Activated CD8-positive, alpha-beta memory T cell treated with anti-CD3 and anti-CD28 coated beads, Interleukin-2, amount 10 ng/mL, durations not matched to agents 7 days and 5 days (primary cell): ENCODE measurements at regions of chr17 and their contacts with region 1.

Region 1: DNA sequence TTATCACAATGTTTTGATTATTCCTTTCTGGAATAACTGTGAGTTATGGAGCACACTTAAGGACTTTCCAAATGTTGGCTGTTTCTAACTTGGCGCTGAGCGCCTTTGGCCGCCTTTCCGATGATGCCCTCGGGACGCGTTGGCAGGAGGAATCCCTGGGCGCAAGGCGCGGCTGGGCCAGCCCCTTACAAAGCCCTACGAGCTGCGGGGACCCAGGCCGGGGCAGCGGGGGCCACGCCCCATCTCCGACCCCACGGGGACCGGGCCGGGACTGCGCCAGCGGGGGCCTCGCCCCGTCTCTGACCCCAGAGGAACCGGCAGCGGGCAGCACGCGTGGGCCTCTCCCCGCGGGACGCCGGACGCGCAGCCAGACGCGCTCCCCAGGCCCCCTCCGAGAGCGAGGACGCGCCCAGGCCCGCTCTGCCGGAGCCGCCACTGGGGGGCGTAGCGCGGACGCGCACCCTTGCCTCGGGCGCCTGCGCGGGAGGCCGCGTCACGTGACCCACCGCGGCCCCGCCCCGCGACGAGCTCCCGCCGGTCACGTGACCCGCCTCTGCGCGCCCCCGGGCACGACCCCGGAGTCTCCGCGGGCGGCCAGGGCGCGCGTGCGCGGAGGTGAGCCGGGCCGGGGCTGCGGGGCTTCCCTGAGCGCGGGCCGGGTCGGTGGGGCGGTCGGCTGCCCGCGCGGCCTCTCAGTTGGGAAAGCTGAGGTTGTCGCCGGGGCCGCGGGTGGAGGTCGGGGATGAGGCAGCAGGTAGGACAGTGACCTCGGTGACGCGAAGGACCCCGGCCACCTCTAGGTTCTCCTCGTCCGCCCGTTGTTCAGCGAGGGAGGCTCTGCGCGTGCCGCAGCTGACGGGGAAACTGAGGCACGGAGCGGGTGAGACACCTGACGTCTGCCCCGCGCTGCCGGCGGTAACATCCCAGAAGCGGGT is at the start of gene GAA:
- DNase-seq: peak; percentile 89
- ATAC-seq: peak; percentile 92
- H3K4me3 Mint-ChIP-seq: peak within 1 kb of the TSS; percentile 84
- H3K27ac Mint-ChIP-seq: peak within 1 kb of the TSS; percentile 78
- H3K4me1 Mint-ChIP-seq: peaks cover 24% of the 10 kb centered on the region
- H3K27me3 Mint-ChIP-seq: peaks cover 4% of the 10 kb centered on the region
- total RNA-seq, gene GAA: 31.9 to 34.7 TPM

Region 2: GRCh38 chr17:80008383-80008840 is 92.9 kb before region 1 on chr17:
- CTCF ChIA-PET with region 1: interaction called, 14 read pairs
- DNase-seq: peak; percentile 83
- ATAC-seq: peak; percentile 86
- H3K4me3 Mint-ChIP-seq: no peak overlapping the region
- H3K27ac Mint-ChIP-seq: no peak overlapping the region
- H3K4me1 Mint-ChIP-seq: peaks cover 1% of the 10 kb centered on the region
- H3K27me3 Mint-ChIP-seq: no peaks in the 10 kb centered on the region

Region 3: DNA sequence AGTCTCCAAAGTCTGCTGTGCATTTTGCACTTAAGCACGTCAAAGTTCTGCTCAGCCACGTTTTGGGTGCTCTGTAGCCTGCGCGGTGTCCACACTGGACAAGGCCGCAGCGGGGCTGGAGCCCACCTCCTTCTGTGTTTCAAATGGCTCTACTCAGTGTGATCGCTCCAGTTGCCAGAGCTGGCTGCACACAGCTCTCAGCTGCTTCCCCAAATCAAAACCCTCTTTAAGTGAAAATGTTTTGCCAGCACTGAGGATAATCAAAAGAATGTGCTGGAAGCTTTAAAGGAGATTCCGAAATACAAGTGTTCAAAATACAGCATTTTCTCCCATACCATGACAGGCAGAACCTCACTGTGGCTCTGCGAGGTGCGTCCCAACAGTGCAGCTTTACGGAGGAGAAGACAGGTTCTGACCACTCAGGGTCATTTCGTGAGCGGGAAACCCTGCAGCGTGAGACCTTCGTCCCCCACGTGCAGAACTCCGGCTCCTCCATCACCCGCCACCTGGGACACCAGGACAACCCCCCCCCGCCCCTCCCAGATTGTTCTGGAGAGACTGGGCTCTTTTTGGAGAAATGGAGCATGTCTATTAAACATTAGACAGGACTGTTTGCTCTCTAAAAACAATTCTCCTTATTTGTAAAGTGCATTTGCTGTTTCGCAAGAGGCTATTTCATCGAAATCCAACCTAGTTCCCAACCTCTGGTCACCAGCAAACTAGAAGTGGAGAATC is 82.2 kb before region 1 on chr17:
- CTCF ChIA-PET with region 1: no interaction called
- DNase-seq: no peak
- ATAC-seq: no peak
- H3K4me3 Mint-ChIP-seq: no peak overlapping the region
- H3K27ac Mint-ChIP-seq: no peak overlapping the region
- H3K4me1 Mint-ChIP-seq: no peaks in the 10 kb centered on the region
- H3K27me3 Mint-ChIP-seq: no peaks in the 10 kb centered on the region

Region 4: GRCh38 chr17:80082403-80083135 is 18.7 kb before region 1 on chr17:
- CTCF ChIA-PET with region 1: interaction called, 45 read pairs
- DNase-seq: peak; percentile 75
- ATAC-seq: peak; percentile 76
- H3K4me3 Mint-ChIP-seq: no peak overlapping the region
- H3K27ac Mint-ChIP-seq: no peak overlapping the region
- H3K4me1 Mint-ChIP-seq: peaks cover 1% of the 10 kb centered on the region
- H3K27me3 Mint-ChIP-seq: peaks cover 7% of the 10 kb centered on the region

Region 5: DNA sequence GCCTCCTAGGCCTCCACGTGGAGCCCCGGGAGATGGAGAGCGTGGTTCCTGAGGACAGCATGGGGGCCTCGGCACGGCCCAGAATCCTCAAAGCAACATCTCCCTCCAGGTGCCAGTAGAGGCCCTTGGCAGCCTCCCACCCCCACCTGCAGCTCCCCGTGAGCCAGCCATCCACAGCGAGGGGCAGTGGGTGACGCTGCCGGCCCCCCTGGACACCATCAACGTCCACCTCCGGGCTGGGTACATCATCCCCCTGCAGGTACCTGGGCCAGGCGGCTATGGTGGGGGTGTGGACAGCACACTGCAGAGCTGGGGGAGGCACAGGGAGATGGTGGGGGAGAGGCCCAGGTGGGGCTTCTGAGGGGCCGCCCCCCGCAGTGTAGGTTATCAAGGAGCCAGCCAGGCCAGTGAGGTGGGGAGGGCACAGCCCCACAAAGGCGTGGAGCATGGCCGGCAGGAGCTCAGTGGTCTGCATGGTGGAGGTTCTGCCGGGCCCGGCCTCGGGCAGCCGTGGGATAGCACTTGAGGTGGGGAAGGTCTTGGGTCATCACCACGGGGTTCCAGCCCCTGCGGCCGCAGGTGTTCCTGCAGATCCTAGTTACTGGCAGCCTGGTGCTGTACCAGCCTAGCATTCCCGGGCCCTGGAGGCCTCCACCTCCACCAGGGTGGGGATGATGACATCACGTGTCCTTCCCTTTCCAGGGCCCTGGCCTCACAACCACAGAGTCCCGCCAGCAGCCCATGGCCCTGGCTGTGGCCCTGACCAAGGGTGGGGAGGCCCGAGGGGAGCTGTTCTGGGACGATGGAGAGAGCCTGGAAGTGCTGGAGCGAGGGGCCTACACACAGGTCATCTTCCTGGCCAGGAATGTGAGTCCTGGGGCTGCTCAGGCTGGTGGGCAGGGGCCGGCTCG is 16.5 kb after region 1 on chr17:
- CTCF ChIA-PET with region 1: interaction called, 19 read pairs
- DNase-seq: no peak
- ATAC-seq: no peak
- H3K4me3 Mint-ChIP-seq: no peak overlapping the region
- H3K27ac Mint-ChIP-seq: no peak overlapping the region
- H3K4me1 Mint-ChIP-seq: no peaks in the 10 kb centered on the region
- H3K27me3 Mint-ChIP-seq: no peaks in the 10 kb centered on the region

Region 6: DNA sequence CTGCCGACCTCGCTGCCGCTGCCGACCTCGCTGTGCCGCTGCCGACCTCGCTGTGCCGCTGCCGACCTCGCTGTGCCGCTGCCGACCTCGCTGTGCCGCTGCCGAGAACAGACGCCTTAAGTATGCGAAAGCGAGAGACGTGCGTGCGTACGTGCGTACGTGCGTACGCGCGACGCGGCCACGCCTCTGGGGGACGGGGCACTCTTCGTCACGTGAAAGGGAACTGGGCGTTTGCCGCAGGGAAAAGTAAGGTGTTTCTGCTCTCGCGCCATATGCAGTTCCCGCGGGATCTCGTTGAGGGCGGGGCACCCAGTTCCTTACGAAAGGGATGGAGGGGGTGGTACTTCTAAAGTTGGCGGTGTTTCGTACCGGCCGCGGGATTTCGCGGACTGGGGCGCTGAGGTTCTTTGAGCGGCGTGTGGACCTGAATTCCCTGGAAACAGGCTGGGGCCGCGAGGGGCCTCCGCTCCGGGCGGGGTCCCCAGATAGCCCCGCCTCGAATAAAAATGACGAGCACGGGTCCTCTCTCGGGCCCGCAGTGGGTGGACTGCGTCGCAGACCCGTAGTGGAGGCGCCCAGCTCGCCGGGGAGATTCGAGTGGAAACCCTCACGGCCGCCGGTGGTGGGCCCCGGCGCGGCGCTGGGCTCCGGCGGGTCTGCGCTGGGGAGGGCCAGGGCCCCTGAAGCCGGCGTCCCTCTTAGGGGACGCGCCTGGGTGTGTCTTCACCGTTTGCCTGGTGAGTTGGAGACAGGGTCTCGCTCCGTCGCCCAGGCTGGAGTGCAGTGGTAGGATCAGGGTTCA is 46.0 kb after region 1 on chr17 and contains the start of gene EIF4A3:
- CTCF ChIA-PET with region 1: interaction called, 22 read pairs
- DNase-seq: peak; percentile 99
- ATAC-seq: peak; percentile 82
- H3K4me3 Mint-ChIP-seq: peak within 1 kb of the TSS; percentile 81
- H3K27ac Mint-ChIP-seq: peak within 1 kb of the TSS; percentile 95
- H3K4me1 Mint-ChIP-seq: peaks cover 47% of the 10 kb centered on the region
- H3K27me3 Mint-ChIP-seq: no peaks in the 10 kb centered on the region
- total RNA-seq, gene EIF4A3: 145 to 161 TPM

Region 7: DNA sequence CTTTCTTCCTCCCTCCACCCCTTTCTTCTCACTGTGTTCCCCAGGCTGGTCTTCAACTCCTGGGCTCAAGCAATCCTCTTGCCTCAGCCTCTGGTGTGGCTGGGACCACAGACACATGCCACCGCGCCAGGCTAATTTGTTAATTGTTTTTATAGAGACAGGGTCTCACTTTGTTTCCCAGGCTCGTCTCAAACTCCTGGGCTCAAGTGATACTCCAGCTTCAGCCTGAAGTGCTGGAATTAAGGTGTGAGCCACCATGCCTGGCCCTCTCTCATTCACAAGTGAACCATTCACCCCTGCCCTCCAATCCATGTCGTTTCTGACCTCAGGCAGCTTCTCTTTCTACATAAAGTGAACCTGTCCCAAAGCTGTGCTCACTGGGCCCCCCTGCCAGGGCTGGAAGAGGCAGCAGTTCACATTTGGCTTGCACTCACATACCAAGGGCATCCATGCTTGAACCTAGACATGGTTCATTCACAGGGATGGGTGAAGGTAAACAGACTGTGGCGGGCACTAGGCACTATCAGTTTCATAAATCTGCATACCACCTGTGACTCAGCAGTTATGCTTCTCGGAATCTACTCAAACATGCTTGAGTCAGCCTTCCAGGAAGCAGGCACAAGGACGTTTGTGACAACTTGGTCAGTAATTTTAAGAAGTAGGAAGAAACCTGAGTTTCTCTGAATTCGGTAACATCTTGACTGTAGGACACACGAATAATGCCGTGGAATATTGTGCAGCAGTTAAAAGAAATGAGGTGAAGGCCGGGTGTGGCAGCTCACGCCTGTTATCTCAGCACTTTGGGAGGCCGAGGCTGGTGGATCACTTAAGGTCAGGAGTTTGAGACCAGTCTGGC is 153.3 kb after region 1 on chr17:
- CTCF ChIA-PET with region 1: interaction called, 14 read pairs
- DNase-seq: peak; percentile 90
- ATAC-seq: peak; percentile 72
- H3K4me3 Mint-ChIP-seq: peak overlapping the region; percentile 65
- H3K27ac Mint-ChIP-seq: peak overlapping the region; percentile 98
- H3K4me1 Mint-ChIP-seq: peaks cover 76% of the 10 kb centered on the region
- H3K27me3 Mint-ChIP-seq: no peaks in the 10 kb centered on the region